Activated CD4-positive, alpha-beta T cell treated with anti-CD3 and anti-CD28 coated beads for 36 hours (primary cell): ENCODE measurements at regions of chr1 and their contacts with region 1.

Region 1: GRCh38 chr1:70134148-70134547 is 71.2 kb downstream of the LRRC40 start:
- DNase-seq: no peak
- ATAC-seq: no peak
- H3K4me3 Mint-ChIP-seq: no peak overlapping the region
- H3K27ac Mint-ChIP-seq: no peak overlapping the region
- H3K4me1 Mint-ChIP-seq: no peaks in the 10 kb centered on the region
- H3K27me3 Mint-ChIP-seq: no peaks in the 10 kb centered on the region

Region 2: GRCh38 chr1:69846267-69846666 is 287.9 kb before region 1 on chr1:
- CTCF ChIA-PET with region 1: no interaction called
- POLR2A ChIA-PET with region 1: no interaction called
- intact Hi-C with region 1: no loop called
- DNase-seq: no peak
- ATAC-seq: no peak
- H3K4me3 Mint-ChIP-seq: no peak overlapping the region
- H3K27ac Mint-ChIP-seq: no peak overlapping the region
- H3K4me1 Mint-ChIP-seq: no peaks in the 10 kb centered on the region
- H3K27me3 Mint-ChIP-seq: no peaks in the 10 kb centered on the region

Region 3: GRCh38 chr1:70487910-70488665 is 353.9 kb after region 1 on chr1:
- CTCF ChIA-PET with region 1: no interaction called
- POLR2A ChIA-PET with region 1: no interaction called
- intact Hi-C with region 1: loop called (anchors 1 kb)
- DNase-seq: peak; percentile 38
- ATAC-seq: peak; percentile 66
- H3K4me3 Mint-ChIP-seq: no peak overlapping the region
- H3K27ac Mint-ChIP-seq: no peak overlapping the region
- H3K4me1 Mint-ChIP-seq: no peaks in the 10 kb centered on the region
- H3K27me3 Mint-ChIP-seq: no peaks in the 10 kb centered on the region